Psoas muscle (tissue), 8 donors: ENCODE measurements at regions of chrX and their contacts with region 1.

Region 1: GRCh38 chrX:110665223-110666002 is 130.2 kb downstream of the CHRDL1 start:
- DNase-seq: peak in 1 of 2 donors; percentile 18
- ATAC-seq: peak in 3 of 4 donors; percentile 45 to 71 (median 54)
- H3K4me3 ChIP-seq: no peak overlapping the region
- H3K27ac ChIP-seq: no peak overlapping the region
- H3K4me1 ChIP-seq: no peaks in the 10 kb centered on the region
- H3K27me3 ChIP-seq: peaks cover 0 to 18% (median 0%) of the 10 kb centered on the region in 3 donors
- CTCF ChIP-seq: peak; percentile 46

Region 2: GRCh38 chrX:110847334-110847733 is 181.9 kb after region 1 on chrX:
- intact Hi-C with region 1: loop called in 1 of 2 experiments (anchors 5 kb)
- DNase-seq: no peak
- ATAC-seq: peak in 3 of 4 donors; percentile 64 to 77 (median 68)
- H3K4me3 ChIP-seq: no peak overlapping the region
- H3K27ac ChIP-seq: no peak overlapping the region
- H3K4me1 ChIP-seq: no peaks in the 10 kb centered on the region
- H3K27me3 ChIP-seq: peaks cover 0 to 28% (median 0%) of the 10 kb centered on the region in 3 donors
- CTCF ChIP-seq: peak; percentile 76